OCI-LY7 (cell line): ENCODE measurements at regions of chr19 and their contacts with region 1.

Region 1: DNA sequence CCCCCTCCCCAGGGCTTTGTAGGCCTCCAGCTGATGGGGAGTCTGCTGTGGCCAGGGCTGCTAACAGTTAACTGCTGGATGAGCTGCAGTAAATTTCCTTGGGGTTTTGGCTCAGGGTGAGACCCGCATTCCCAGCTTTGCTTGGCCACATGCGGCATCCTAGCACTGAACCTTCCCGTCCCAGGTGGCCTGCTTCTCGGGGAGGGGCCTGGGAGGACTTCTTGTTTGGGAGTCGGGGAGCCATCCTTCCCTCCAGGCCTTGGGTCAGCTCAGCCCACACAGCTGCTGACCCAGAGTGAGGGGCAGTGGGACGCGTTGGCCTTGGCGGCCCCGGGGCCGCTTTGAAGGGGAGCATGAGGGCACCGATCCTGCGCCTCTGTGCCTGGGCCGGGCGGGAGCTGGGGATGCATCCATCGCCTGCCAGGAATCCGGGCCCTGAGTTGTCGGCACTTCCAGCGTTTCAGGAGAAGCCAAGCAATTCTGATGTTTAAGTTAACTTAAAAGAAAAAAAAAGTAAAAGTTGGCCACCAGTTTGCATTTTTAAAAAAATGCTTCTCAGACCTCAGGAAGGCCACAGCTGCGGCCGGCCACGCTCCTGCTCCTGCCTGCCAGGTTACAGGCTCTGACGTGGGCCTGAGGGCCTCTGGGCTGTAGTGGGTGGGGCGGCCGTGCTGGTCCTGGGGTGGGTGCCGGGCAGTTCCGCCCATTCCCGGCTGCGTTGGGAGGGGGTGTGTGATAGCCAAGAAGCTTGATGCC is 27.7 kb downstream of the CRTC1 start:
- DNase-seq: no peak
- H3K4me3 ChIP-seq: no peak overlapping the region
- H3K27ac ChIP-seq: no peak overlapping the region
- H3K4me1 ChIP-seq: no peaks in the 10 kb centered on the region
- CTCF ChIP-seq: no peak

Region 2: DNA sequence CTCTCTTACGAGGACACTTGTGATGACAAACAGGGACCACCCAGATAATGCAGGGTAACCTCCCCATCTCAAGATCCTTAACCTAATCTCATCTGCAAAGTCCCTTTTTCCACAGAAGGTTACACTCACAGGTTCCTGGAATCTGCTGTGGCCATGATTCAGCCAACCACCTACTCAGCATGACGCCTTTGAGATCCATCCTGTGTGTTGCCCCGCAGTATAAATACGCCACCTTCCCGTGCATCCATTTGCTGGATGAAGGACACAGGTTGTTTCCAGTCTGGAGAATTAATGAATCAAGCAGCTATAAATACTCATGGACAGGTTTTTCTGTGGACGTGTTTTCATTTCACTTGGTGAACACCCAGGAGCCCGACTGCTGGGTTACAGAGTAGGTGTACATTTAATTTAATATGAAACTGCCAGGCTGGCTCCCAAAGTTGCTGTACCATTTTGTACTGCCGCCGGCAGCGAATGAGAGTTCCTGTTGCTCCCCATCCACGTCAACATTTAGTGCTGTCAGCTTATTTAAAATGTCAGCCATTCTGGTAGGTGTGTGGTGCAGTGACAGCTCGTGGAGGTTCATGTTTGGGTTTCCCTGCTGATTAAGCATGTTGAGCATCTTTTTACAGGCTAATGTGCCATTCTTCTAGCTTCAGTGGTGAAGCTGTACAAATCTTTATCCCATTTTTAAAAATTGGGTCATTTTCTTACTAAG is 229.5 kb before region 1 on chr19:
- CTCF ChIA-PET with region 1: no interaction called
- POLR2A ChIA-PET with region 1: interaction called, 12 read pairs
- intact Hi-C with region 1: no loop called
- DNase-seq: no peak
- H3K4me3 ChIP-seq: no peak overlapping the region
- H3K27ac ChIP-seq: no peak overlapping the region
- H3K4me1 ChIP-seq: peaks cover 27% of the 10 kb centered on the region
- CTCF ChIP-seq: no peak

Region 3: GRCh38 chr19:18733196-18733647 is 22.0 kb after region 1 on chr19:
- CTCF ChIA-PET with region 1: no interaction called
- POLR2A ChIA-PET with region 1: no interaction called
- intact Hi-C with region 1: no loop called
- DNase-seq: no peak
- H3K4me3 ChIP-seq: no peak overlapping the region
- H3K27ac ChIP-seq: no peak overlapping the region
- H3K4me1 ChIP-seq: no peaks in the 10 kb centered on the region
- CTCF ChIP-seq: no peak